ENCODE measurements at regions of chr1 and their contacts with region 1.

Region 1: DNA sequence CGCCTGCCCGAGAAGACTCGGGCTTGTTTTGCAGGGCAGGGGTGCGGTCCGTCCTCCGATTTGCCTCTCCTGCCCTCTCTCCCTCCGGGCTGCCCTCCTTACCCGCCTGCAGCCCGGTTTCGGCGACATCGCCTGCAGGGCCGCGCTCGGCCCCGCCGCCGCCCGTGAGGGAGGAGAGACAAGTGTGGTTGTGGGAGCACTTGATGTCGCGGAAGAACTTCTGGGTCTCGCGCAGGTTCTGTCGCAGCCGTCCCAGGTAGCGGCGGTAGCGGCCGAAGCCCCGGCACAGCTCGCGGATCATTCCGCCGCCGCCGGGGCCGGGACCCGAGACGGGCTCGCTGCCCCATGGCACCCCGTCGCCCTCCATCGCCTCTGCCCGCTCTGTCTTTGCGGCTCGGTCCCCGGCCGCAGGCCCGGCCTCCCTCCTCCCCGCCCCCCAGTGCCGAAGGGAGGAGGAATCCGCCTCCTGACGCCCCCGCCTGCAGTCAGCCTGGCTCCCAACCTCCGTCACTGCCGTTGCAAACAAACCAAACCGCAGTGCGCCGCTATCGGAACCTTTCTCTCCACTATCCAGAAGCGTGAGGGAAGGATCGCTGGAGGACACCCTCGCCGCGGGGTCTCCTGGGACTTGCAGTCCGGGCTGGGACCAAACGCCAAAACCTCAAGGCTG is at the start of gene DSTYK:
- DNase-seq: peak; percentile 95
- H3K4me3 ChIP-seq: peak within 1 kb of the TSS; percentile 81 to 90 (median 89)
- H3K27ac ChIP-seq: peak within 1 kb of the TSS; percentile 14
- H3K4me1 ChIP-seq: peaks cover 7% of the 10 kb centered on the region
- H3K27me3 ChIP-seq: peaks cover 9 to 15% of the 10 kb centered on the region in 2 experiments
- CTCF ChIP-seq: no peak
- POLR2A ChIP-seq: peak; percentile 54
- total RNA-seq, gene DSTYK: 8.1 and 8.7 TPM in 2 replicates

Region 2: DNA sequence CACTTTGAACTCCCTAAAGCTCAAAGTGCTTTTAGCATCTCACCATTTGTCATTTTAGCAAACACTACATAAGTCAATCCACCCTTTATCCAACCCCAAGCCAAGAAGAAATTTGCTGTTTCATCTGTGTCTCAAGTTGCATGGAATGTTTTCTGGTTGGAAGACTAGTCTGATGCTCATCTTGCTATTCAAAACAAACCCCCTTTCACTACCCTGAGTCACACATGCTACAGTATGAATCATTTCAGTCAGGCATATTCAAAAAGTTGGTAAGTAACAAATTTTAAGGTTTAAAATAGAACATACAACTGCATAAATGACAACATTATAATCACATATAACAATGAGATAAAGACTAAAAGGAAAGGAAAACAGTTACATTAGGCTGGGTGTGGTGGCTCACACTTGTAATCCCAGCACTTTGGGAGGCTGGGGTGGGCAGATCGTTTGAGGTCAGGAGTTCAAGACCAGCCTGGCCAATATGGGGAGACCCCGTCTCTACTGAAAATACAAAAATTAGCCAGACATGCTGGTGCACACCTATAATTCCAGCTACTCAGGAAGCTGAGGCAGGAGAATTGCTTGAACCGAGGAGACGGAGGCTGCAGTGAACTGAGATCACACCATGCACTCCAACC is 38.5 kb before region 1 on chr1:
- CTCF ChIA-PET with region 1: no interaction called
- POLR2A ChIA-PET with region 1: no interaction called
- dilution Hi-C with region 1: no loop called
- intact Hi-C with region 1: loop called (anchors 2 kb)
- DNase-seq: peak; percentile 61
- H3K4me3 ChIP-seq: no peak overlapping the region
- H3K27ac ChIP-seq: no peak overlapping the region
- H3K4me1 ChIP-seq: peaks cover 14% of the 10 kb centered on the region
- H3K27me3 ChIP-seq: no peaks in the 10 kb centered on the region
- CTCF ChIP-seq: no peak
- POLR2A ChIP-seq: no peak

Region 3: GRCh38 chr1:205227584-205228006 is 16.3 kb after region 1 on chr1 and contains the start of gene TMCC2:
- CTCF ChIA-PET with region 1: interaction called, 6 read pairs
- POLR2A ChIA-PET with region 1: no interaction called
- dilution Hi-C with region 1: no loop called
- intact Hi-C with region 1: loop called (anchors 1 kb)
- DNase-seq: peak; percentile 81
- H3K4me3 ChIP-seq: peak within 1 kb of the TSS; percentile 49 to 64 (median 60)
- H3K27ac ChIP-seq: no peak within 1 kb of the TSS
- H3K4me1 ChIP-seq: peaks cover 17% of the 10 kb centered on the region
- H3K27me3 ChIP-seq: peaks cover 17 to 36% of the 10 kb centered on the region in 2 experiments
- CTCF ChIP-seq: peak in 1 of 2 donors; percentile 6
- POLR2A ChIP-seq: no peak
- total RNA-seq, gene TMCC2: 2.0 and 2.1 TPM in 2 replicates

Region 4: DNA sequence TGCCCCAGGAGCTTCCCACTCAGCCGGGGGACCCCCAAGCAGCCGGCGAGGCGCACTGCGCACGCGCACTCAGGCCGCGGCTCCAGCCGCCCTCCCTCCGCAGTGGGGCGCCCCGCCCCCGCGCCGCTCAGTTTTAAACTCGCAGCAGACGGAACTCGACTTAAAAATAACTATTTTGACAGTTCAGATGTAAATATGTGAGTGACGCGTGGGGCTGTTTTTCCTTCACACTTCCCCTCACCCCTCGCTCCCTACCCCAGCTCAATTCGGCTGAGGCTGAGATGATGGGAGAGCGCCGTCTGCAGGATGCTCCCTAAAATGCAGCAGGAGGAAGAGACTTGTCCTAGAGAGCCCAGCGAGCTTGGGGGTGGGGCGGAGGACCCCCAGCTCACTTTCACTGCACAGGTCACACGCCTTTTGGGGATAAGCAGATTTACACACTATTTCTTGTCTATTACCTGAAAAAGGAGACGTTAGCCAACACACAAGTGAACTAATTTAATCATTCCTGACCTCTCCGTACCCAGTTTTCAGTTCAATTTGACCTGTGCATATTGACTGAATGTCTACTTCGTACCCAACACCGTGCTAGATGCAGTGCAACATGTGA is 219.5 kb after region 1 on chr1:
- CTCF ChIA-PET with region 1: no interaction called
- POLR2A ChIA-PET with region 1: no interaction called
- dilution Hi-C with region 1: no loop called
- intact Hi-C with region 1: no loop called
- DNase-seq: peak; percentile 59
- H3K4me3 ChIP-seq: peak overlapping the region; percentile 18 to 51 (median 34)
- H3K27ac ChIP-seq: no peak overlapping the region
- H3K4me1 ChIP-seq: no peaks in the 10 kb centered on the region
- H3K27me3 ChIP-seq: peaks cover 12 to 19% of the 10 kb centered on the region in 2 experiments
- CTCF ChIP-seq: peak; percentile 67 to 79
- POLR2A ChIP-seq: no peak